PC-3 (cell line): ENCODE measurements at regions of chr5 and their contacts with region 1.

Region 1: DNA sequence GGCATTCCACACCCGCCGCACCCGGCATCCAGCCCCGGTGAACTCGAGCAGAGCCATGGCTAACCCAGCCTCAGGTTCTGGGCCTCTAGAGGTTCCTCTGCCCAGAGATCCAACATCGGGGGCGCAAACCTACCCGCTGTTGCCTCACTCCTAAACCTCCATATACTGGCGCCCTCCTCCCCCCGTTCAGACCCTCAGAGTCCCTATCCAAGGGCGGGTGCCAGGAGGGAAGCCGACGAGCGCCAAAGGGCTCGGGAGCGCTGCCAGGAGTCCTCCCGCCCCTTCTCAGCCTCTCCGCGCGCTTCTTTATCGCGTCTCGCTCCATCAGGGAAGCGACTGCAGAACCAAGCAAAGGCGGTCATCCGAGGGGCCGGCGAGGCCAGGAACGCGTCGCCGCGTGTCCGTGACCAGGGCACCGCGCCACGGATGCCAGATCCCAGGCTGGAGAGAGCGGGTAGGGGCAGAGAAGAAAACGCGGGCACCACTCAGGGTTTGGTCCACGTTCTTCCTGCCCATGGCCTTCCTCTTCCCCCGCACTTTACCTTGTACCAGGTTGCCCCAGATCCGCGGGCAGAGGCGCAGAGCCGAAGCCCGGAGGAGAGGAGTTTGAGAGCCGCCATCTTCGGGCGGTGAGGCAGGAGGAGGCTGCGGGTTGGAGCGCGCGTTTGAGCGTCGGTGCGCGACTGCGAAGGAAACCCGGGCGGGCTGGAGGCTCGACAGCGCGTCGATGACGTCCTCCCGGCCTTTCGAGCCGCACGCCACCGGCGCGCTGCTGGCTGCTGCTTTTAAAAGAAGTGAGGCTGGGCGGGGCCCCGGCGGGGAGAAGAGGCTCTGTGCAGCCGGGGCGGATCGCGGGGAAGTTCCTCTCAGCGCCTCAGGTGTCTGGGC is at the start of gene OXCT1:
- DNase-seq: peak; percentile 93
- ATAC-seq: peak; percentile 72
- H3K4me3 ChIP-seq: peak within 1 kb of the TSS; percentile 77
- H3K27ac ChIP-seq: peak within 1 kb of the TSS; percentile 13
- H3K4me1 ChIP-seq: peaks cover 22% of the 10 kb centered on the region
- H3K27me3 ChIP-seq: no peaks in the 10 kb centered on the region
- CTCF ChIP-seq: no peak
- total RNA-seq, gene OXCT1: 25.5 and 30.8 TPM in 2 replicates

Region 2: DNA sequence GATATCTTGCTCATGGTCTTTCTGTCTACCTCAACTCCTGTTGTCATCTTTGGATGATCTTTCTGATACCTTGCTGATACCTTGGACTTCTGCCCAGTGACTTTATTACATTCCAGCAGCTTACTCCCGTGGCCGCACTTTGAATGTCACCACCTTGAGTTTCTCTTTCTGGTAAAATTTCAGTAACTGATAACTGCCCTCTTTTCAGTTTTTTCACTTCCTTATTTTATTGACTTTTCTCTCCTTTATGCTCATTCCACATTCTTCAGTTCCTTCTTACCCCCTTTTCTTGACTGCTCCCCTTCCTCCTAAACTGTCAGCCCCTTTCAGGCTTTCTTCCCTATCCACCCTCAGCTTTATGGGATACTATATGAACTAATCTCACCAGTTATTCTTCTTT is 48.1 kb after region 1 on chr5:
- CTCF ChIA-PET with region 1: no interaction called
- POLR2A ChIA-PET with region 1: no interaction called
- intact Hi-C with region 1: loop called (anchors 5 kb)
- DNase-seq: no peak
- ATAC-seq: no peak
- H3K4me3 ChIP-seq: no peak overlapping the region
- H3K27ac ChIP-seq: no peak overlapping the region
- H3K4me1 ChIP-seq: peaks cover 10% of the 10 kb centered on the region
- H3K27me3 ChIP-seq: no peaks in the 10 kb centered on the region
- CTCF ChIP-seq: no peak